Activated CD8-positive, alpha-beta T cell treated with anti-CD3 and anti-CD28 coated beads, Interleukin-2, amount 10 ng/mL, durations not matched to agents 7 days and 5 days (primary cell): ENCODE measurements at regions of chr22 and their contacts with region 1.

Region 1: GRCh38 chr22:39110631-39111561 is 13.9 kb downstream of the APOBEC3H start:
- DNase-seq: no peak
- ATAC-seq: no peak
- H3K4me3 Mint-ChIP-seq: no peak overlapping the region
- H3K27ac Mint-ChIP-seq: no peak overlapping the region
- H3K4me1 Mint-ChIP-seq: peaks cover 17% of the 10 kb centered on the region
- H3K27me3 Mint-ChIP-seq: no peaks in the 10 kb centered on the region

Region 2: GRCh38 chr22:39087098-39087497 is 23.8 kb before region 1 on chr22:
- CTCF ChIA-PET with region 1: no interaction called
- POLR2A ChIA-PET with region 1: no interaction called
- DNase-seq: no peak
- ATAC-seq: no peak
- H3K4me3 Mint-ChIP-seq: no peak overlapping the region
- H3K27ac Mint-ChIP-seq: peak overlapping the region; percentile 94
- H3K4me1 Mint-ChIP-seq: peaks cover 94% of the 10 kb centered on the region
- H3K27me3 Mint-ChIP-seq: no peaks in the 10 kb centered on the region

Region 3: DNA sequence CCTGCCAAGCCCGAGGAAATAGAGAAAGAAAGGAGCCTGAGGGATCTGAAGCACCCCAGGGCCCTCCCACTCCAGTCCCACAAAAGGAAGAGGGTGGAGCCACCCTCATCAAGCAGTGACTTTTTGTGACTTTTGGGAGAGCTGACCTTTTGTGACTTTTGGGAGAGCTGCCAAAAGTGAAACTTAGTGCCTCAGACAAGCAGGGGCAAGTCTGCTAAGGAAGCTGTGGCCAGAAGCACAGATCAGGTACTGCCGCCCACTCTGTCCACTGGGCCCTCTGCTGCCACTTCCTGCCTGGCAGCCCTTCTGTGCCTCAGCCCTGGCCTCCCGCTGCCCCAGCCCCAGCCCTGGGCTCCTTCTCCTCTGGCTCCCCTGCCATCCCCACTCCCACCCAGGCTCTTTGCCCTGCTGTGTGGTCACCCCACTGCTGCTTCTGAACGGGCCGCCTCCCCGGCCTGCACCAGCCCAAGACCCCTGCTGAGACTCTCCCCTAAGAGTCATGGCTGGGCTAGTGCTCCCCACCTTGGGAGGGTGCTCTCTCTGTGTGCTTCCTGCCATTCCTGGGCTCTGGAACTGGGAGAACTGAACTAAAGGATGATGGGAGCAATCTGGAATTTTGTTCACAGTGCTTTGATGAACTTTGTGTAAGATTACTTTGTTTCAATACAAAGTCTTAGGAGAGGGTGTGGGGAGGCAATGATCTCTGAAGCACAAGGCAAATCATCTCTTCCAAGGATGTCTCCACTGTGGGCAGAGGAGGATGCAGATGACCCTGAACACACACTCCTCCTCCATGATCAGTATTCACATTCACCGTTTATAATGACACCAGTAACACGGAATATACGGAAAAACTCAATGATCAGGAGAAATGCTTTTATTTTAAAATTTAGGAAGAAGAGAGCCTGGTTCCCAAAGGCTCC is 13.5 kb before region 1 on chr22 and contains the start of gene APOBEC3H:
- CTCF ChIA-PET with region 1: interaction called, 3 read pairs
- POLR2A ChIA-PET with region 1: interaction called, 13 read pairs
- DNase-seq: peak; percentile 70
- ATAC-seq: peak; percentile 71
- H3K4me3 Mint-ChIP-seq: peak within 1 kb of the TSS; percentile 90
- H3K27ac Mint-ChIP-seq: peak within 1 kb of the TSS; percentile 95
- H3K4me1 Mint-ChIP-seq: peaks cover 84% of the 10 kb centered on the region
- H3K27me3 Mint-ChIP-seq: no peaks in the 10 kb centered on the region
- total RNA-seq, gene APOBEC3H: 82.8 to 89.7 TPM

Region 4: DNA sequence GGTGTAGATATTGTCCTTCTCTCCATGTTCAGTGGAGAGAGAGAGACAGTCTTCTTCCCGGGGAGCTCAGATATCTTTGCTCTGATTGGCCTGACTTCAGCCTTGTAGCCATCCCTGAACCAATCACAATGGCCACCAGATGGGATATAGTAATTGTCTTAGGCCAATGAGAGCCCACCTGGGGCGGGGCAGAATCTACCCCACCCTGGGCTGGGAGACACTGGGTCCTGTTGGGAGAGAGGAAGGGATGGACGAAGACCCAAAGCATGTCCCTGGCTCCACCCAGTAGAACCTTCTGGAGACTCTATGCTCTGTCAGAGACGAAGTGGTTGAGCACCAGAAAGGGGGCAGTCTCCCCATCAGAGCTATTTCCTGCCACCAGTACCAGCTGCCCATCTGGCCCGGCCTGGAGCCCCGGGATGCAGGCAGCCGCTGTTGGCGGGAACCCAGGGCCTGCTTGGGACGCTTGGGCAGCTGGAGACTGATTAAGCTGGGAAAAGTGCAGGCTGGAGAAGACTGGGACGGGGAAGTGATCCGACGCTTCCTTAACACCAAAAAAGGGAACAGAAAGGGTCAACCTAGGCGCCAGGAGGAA is 73.2 kb after region 1 on chr22:
- CTCF ChIA-PET with region 1: no interaction called
- POLR2A ChIA-PET with region 1: no interaction called
- DNase-seq: no peak
- ATAC-seq: no peak
- H3K4me3 Mint-ChIP-seq: no peak overlapping the region
- H3K27ac Mint-ChIP-seq: no peak overlapping the region
- H3K4me1 Mint-ChIP-seq: no peaks in the 10 kb centered on the region
- H3K27me3 Mint-ChIP-seq: peaks cover 10% of the 10 kb centered on the region